ENCODE measurements at regions of chr2 and their contacts with region 1.

Region 1: DNA sequence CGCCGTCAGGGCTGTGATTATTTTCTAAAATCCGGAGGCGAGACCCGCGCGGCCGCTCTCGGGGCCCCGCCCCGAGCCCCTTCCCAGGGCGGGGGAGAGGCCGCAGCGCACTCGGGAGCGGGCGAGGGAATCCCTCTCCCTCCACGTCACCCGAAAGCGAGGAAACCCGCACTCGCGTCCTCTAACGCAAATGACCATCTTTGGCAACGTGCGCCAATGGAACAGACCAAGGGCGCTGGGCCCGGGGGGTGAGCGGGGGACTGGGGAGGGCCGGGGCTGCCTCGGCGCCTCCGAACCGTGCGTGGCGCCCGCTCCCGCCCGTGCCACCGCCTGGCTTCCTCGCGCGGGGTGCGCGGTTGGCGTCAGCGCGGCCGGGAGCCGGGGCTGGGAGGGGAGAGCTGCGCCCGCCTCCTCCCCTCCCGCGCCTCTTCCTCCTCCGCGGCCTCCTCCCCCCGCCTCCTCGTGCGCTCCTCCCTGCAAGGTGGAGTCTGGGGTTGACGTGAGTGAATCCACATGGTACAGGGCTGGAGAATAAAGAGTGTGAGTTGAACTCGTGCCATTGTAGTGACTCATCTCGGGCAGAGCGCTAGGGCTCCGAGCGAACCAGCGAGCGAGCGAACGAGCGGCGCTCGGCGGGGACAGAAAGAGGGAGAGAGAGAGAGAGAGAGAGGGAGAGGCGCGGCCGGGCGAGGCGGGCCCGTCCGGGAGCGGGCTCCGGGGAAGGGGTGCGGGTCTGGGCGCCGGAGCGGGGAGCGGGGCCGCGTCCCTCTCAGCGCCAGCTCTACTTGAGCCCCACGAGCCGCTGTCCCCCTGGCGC is at the start of gene FOSL2:
- DNase-seq: peak; percentile 96 to 98 (median 98)
- ATAC-seq: peak; percentile 76 to 78
- H3K4me3 ChIP-seq: peak within 1 kb of the TSS; percentile 83
- H3K27ac ChIP-seq: peak within 1 kb of the TSS; percentile 99
- H3K4me1 ChIP-seq: peaks cover 5% of the 10 kb centered on the region
- H3K27me3 ChIP-seq: no peaks in the 10 kb centered on the region
- total RNA-seq, gene FOSL2: 38.9 to 128 (median 56.6) TPM

Region 2: GRCh38 chr2:27703638-27704341 is 688.7 kb before region 1 on chr2:
- intact Hi-C with region 1: loop called in 2 of 4 experiments (anchors 5 to 10 kb)
- DNase-seq: peak; percentile 79 to 90 (median 84)
- ATAC-seq: peak; percentile 49 to 62
- H3K4me3 ChIP-seq: no peak overlapping the region
- H3K27ac ChIP-seq: no peak overlapping the region
- H3K4me1 ChIP-seq: no peaks in the 10 kb centered on the region
- H3K27me3 ChIP-seq: no peaks in the 10 kb centered on the region

Region 3: GRCh38 chr2:27754138-27754588 is 638.3 kb before region 1 on chr2:
- intact Hi-C with region 1: loop called in 2 of 4 experiments (anchors 10 kb)
- DNase-seq: peak; percentile 80 to 92 (median 89)
- ATAC-seq: peak; percentile 74 to 83
- H3K4me3 ChIP-seq: no peak overlapping the region
- H3K27ac ChIP-seq: no peak overlapping the region
- H3K4me1 ChIP-seq: no peaks in the 10 kb centered on the region
- H3K27me3 ChIP-seq: no peaks in the 10 kb centered on the region

Region 4: DNA sequence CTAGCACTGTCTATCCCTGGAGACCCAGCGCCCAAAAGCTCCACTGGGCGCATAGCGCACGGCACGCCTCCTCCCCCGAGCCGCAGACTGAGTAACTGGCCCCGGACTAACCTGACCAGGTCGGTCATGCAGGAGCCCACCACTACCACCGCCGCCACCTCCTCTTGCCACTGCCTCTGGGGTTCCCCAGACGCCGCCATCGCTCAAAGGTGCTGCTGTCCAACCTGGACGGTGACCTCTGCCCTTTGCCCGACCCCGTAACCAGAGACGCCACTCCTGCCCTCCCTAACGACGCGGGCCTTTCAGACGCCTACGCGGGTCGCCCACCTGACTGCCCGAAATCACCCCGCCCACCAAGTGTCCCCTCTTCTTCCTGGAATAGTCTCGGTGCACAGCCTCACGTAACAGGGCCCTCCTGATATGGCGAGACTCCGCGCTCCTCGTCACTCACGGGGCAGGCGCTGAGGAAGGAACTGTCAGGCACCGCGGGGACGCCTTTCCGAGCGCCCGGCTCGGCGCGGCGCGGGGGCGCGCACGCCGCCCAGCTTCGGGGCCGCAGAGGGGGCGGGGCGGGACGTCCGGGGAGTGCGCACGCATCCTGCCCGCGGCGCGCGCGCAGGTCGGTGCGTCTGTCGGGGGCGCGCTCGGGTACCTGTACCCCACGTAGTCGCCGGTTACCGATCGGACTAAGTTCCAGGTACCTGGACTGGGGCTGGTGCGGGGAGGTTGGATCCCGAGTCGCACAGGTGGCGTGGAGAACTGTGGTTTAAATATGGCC is 502.2 kb before region 1 on chr2 and contains the starts of genes BABAM2 and RBKS:
- intact Hi-C with region 1: loop called in 3 of 4 experiments (anchors 2 to 10 kb)
- DNase-seq: peak; percentile 88 to 95 (median 95)
- ATAC-seq: peak; percentile 98
- H3K4me3 ChIP-seq: peak within 1 kb of the TSS; percentile 66
- H3K27ac ChIP-seq: peak within 1 kb of the TSS; percentile 95
- H3K4me1 ChIP-seq: no peaks in the 10 kb centered on the region
- H3K27me3 ChIP-seq: no peaks in the 10 kb centered on the region
- total RNA-seq, gene BABAM2: 63.8 to 65.2 (median 64.2) TPM
- total RNA-seq, gene RBKS: 1.4 to 3.9 (median 2.6) TPM

Region 5: DNA sequence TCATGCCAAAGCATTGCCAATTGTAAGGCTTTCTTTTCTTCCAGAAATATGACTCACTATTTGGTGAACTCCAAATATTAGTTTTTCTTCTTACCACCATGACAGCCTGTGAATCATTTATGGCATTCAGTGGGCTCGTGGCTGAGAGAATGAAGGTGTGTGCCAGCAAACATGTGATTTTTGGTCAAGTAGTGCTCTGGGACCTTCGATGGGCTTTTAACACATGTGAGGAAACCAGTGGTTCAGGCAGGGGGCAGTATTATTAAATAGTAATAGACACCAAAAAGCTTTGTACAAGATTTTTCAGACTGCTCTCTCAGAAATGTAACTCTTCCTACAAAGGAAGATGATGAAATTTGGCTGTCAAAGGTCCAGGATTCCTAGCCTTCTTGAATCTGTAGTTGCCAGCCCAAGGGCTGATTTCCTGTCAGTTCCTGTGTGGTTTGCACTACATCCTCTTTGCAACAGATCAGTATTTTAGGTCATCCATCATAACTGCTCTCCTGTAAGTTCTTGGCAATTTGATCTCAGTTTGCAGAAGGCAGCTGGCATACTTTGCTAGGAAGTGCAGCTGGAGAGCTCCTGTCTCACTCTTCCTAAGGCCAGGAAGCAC is 437.6 kb before region 1 on chr2:
- intact Hi-C with region 1: loop called in 3 of 4 experiments (anchors 5 to 10 kb)
- DNase-seq: peak in 2 of 3 donors; percentile 55 to 63
- ATAC-seq: peak; percentile 86 to 88
- H3K4me3 ChIP-seq: no peak overlapping the region
- H3K27ac ChIP-seq: peak overlapping the region; percentile 21
- H3K4me1 ChIP-seq: peaks cover 10% of the 10 kb centered on the region
- H3K27me3 ChIP-seq: no peaks in the 10 kb centered on the region

Region 6: GRCh38 chr2:28338046-28338817 is 54.3 kb before region 1 on chr2:
- intact Hi-C with region 1: loop called in 3 of 4 experiments (anchors 5 kb)
- DNase-seq: peak; percentile 89 to 95 (median 91)
- ATAC-seq: peak; percentile 65 to 73
- H3K4me3 ChIP-seq: no peak overlapping the region
- H3K27ac ChIP-seq: peak overlapping the region; percentile 76
- H3K4me1 ChIP-seq: peaks cover 19% of the 10 kb centered on the region
- H3K27me3 ChIP-seq: no peaks in the 10 kb centered on the region

Region 7: DNA sequence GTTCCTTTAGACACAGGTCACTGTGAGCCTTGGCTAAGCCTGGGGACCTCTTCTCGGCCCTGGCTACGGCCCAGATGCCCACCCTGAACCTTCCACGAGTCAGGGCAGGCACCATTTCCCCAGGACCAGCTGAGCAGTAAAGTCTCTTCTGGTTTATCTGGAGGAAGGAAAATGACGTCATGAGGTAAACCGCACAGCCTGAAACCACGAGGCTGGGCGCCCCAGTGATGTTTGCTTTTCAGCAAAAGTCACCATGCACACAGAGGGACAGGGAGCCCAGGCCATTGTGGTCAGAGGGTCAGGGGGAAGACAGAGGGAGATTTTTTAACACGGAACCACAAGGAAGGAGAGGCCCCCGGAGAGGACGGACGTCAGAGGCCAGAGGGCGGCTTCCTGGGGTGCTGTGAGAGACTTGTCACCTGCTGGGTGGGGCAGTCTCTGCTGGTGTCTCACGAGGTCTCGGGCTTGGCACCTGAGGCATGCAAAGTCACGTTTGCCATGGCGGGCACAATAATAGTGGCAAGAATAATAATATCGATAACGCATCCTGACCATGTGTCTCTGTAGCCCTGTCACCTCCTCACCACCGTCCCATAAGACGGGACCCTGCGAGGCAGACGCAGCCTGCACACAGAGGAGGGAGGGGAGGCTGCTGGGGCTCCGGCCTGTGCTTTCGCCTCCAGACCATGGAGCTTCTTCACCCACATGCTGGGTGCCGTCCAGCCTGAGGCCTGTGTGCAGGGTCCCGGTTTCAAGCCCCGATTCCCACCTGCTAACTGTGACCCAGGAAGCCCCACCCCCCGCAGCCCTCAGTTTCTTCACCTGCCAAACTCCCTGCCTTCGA is 33.1 kb before region 1 on chr2:
- intact Hi-C with region 1: loop called in 1 of 4 experiments (anchors 2 kb)
- DNase-seq: peak in 2 of 3 donors; percentile 70 to 74
- ATAC-seq: no peak
- H3K4me3 ChIP-seq: no peak overlapping the region
- H3K27ac ChIP-seq: no peak overlapping the region
- H3K4me1 ChIP-seq: peaks cover 15% of the 10 kb centered on the region
- H3K27me3 ChIP-seq: no peaks in the 10 kb centered on the region